Heart left ventricle (tissue), 16 donors: ENCODE measurements at regions of chr3 and their contacts with region 1.

Region 1: GRCh38 chr3:54853573-54854404 is 74.1 kb downstream of the LRTM1 start:
- DNase-seq: peak; percentile 66 to 84 (median 73)
- ATAC-seq: peak; percentile 75 to 97 (median 91)
- H3K4me3 ChIP-seq: no peak overlapping the region
- H3K27ac ChIP-seq: no peak overlapping the region
- H3K4me1 ChIP-seq: peaks cover 0 to 9% (median 0%) of the 10 kb centered on the region in 12 donors
- H3K27me3 ChIP-seq: peaks cover 0 to 3% (median 0%) of the 10 kb centered on the region in 9 donors
- CTCF ChIP-seq: peak; percentile 70 to 86 (median 82)
- POLR2A ChIP-seq: no peak

Region 2: GRCh38 chr3:54309601-54310000 is 544.2 kb before region 1 on chr3:
- intact Hi-C with region 1: no loop called
- DNase-seq: no peak
- ATAC-seq: no peak
- H3K4me3 ChIP-seq: no peak overlapping the region
- H3K27ac ChIP-seq: no peak overlapping the region
- H3K4me1 ChIP-seq: no peaks in the 10 kb centered on the region
- H3K27me3 ChIP-seq: no peaks in the 10 kb centered on the region
- CTCF ChIP-seq: no peak
- POLR2A ChIP-seq: no peak

Region 3: GRCh38 chr3:54427941-54428871 is 425.6 kb before region 1 on chr3:
- intact Hi-C with region 1: loop called in 4 of 10 experiments (anchors 10 kb)
- DNase-seq: peak in 4 of 5 donors; percentile 32 to 44 (median 39)
- ATAC-seq: peak in 1 of 4 donors; percentile 52
- H3K4me3 ChIP-seq: peak overlapping the region in 1 of 12 donors; percentile 17
- H3K27ac ChIP-seq: no peak overlapping the region
- H3K4me1 ChIP-seq: peaks cover 0 to 6% (median 0%) of the 10 kb centered on the region in 12 donors
- H3K27me3 ChIP-seq: peaks cover 0 to 2% (median 0%) of the 10 kb centered on the region in 9 donors
- CTCF ChIP-seq: peak; percentile 68 to 89 (median 76)
- POLR2A ChIP-seq: no peak

Region 4: GRCh38 chr3:54800478-54800877 is 53.3 kb before region 1 on chr3:
- intact Hi-C with region 1: no loop called
- DNase-seq: no peak
- ATAC-seq: no peak
- H3K4me3 ChIP-seq: no peak overlapping the region
- H3K27ac ChIP-seq: no peak overlapping the region
- H3K4me1 ChIP-seq: no peaks in the 10 kb centered on the region
- H3K27me3 ChIP-seq: peaks cover 0 to 4% (median 0%) of the 10 kb centered on the region in 9 donors
- CTCF ChIP-seq: no peak
- POLR2A ChIP-seq: no peak

Region 5: DNA sequence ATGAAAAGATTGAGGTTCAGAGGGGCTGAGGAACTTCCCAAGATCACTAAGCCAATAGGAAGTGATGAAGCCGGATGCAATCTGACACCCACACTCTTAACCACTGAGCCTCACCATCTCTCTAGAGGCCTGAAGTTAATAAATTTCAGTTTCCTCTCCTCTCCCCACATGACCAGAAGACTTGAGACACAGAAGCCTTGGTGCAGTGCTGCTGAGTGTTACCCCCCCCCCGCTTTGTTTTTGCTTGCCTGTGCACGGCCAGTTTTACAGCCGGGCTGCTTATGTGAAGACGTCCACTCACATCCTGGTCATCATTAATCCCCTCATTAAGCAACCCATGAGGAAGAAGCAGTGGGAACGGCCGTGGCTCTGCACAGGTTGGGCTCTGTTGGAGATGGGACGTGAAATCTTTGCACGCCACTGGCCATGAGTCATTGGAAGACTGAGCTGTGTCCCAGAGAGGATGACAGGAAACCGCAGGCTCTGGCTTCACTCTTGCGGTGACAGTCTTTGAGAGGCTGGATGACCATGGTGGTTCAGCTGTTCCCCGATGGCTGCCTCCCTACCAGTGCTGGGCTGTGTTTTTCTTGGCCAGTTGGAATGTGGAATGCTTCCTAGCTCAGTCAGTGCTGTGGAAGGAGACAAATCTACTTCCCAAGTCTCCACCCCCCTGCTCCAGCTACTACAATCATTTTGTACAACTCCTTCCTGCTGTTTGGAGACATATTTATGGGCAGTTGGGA is 306.6 kb after region 1 on chr3:
- intact Hi-C with region 1: loop called in 1 of 10 experiments (anchors 10 kb)
- DNase-seq: peak; percentile 28 to 73 (median 65)
- ATAC-seq: peak; percentile 55 to 92 (median 88)
- H3K4me3 ChIP-seq: no peak overlapping the region
- H3K27ac ChIP-seq: peak overlapping the region in 4 of 12 donors; percentile 34 to 59 (median 44)
- H3K4me1 ChIP-seq: peaks cover 0 to 18% (median 0%) of the 10 kb centered on the region in 12 donors
- H3K27me3 ChIP-seq: peaks cover 0 to 2% (median 0%) of the 10 kb centered on the region in 9 donors
- CTCF ChIP-seq: no peak
- POLR2A ChIP-seq: no peak

Region 6: DNA sequence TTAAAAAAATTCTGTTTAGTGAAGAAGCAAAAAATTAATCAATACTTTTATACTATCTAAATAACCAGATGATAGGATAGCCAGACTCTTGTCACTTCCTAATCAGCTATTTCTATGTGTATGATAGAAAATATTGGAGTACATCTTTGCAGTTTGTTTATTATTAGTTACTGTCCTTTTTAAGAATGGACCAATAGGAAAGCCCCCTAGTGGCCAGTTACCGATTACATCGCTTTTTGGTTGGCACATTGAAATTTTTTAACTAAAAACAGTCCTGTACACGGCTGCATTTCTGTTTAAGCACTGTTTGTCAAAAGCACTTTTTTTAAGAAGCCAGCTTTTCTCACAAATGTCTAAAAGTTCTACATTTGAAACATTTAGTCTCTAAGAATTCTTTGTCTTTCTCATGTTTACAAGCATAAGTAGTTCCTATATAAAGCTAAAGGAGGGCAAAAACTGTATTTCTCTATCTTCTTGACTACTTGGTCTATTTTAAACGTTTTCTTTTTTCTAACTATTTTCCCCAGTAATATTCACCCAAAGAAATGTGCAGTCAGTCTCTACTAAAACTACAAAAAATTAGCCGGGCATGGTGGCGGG is 327.2 kb after region 1 on chr3:
- intact Hi-C with region 1: loop called in 8 of 10 experiments (anchors 2 to 10 kb)
- DNase-seq: peak in 1 of 5 donors; percentile 16
- ATAC-seq: no peak
- H3K4me3 ChIP-seq: no peak overlapping the region
- H3K27ac ChIP-seq: no peak overlapping the region
- H3K4me1 ChIP-seq: no peaks in the 10 kb centered on the region
- H3K27me3 ChIP-seq: peaks cover 0 to 15% (median 3%) of the 10 kb centered on the region in 9 donors
- CTCF ChIP-seq: peak; percentile 62 to 83 (median 75)
- POLR2A ChIP-seq: no peak

Region 7: DNA sequence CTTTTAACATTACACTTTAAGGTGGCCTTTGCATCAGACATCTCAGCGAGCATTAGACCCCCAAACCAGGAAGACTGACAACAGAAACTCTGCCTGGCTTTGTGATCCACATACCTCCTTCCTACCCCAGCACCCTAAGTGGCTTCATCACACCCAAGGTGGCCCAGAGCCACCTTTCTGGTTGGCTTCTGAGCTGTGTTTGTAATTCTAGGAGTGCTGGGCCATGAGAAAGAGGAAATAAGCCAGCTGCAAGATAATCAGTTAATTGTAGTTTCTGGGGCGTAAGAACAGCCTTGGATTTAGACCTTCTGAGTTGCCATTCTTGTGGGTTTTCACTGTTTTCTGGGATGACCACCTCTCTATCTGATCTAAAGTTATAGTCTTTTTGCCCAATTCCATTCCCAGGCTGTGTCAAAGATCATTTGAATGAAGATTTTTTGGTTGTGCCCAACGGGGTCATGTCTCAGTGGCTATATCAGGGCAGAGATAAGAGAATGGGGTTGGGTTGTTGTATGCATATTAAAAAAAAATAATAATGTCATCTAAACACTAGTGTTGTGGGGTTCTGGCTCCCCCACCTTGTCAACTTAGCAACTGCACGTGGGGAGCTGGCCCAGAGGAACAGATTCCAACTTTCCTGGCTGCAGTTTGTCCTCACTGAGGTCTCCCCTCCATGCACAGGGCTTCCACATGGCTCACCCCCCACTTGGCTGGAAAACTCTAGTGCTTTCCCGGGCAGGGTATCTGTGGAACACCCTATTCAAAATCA is 868.1 kb after region 1 on chr3:
- intact Hi-C with region 1: loop called in 1 of 10 experiments (anchors 10 kb)
- DNase-seq: no peak
- ATAC-seq: peak in 2 of 4 donors; percentile 30 to 36
- H3K4me3 ChIP-seq: no peak overlapping the region
- H3K27ac ChIP-seq: no peak overlapping the region
- H3K4me1 ChIP-seq: no peaks in the 10 kb centered on the region
- H3K27me3 ChIP-seq: peaks cover 0 to 37% (median 0%) of the 10 kb centered on the region in 9 donors
- CTCF ChIP-seq: peak; percentile 12 to 45 (median 39)
- POLR2A ChIP-seq: no peak